ENCODE measurements at regions of chr22 and their contacts with region 1.

Region 1: DNA sequence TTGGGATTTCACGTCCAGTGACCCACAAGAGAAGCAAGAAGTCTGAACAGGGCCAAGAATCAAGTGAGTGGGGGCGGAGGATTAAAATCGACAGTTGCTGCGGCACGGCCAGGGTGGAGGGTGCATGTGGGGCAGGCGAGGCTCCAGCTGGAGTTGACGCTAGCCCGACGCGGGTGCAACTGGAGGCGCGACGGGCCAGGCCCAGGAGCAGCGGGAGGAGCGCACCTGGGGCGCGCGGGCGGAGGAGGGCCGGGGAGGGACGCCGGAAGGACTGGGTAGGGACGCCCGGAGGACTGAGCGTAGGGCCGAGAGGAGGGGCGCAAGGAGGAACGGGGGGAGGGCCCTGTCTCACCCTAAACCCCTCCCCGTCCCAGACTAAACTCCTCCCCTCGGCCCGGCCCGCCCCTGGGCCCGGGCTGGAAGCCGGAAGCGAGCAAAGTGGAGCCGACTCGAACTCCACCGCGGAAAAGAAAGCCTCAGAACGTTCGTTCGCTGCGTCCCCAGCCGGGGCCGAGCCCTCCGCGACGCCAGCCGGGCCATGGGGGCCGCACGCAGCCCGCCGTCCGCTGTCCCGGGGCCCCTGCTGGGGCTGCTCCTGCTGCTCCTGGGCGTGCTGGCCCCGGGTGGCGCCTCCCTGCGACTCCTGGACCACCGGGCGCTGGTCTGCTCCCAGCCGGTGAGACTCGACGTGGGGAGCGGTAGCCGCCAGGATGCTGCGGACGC is at the start of gene IL17RA:
- DNase-seq: peak; percentile 90 to 95 (median 91)
- H3K4me3 ChIP-seq: peak within 1 kb of the TSS; percentile 59 to 97 (median 78)
- H3K27ac ChIP-seq: peak within 1 kb of the TSS; percentile 61 to 97 (median 84)
- H3K4me1 ChIP-seq: peaks cover 6 to 14% of the 10 kb centered on the region in 2 donors
- H3K27me3 ChIP-seq: no peaks in the 10 kb centered on the region
- CTCF ChIP-seq: no peak
- POLR2A ChIP-seq: peak; percentile 29 to 72
- total RNA-seq, gene IL17RA: 2.2 to 31.8 (median 24.7) TPM

Region 2: GRCh38 chr22:17158568-17159503 is 74.1 kb after region 1 on chr22 and contains the start of gene HDHD5:
- intact Hi-C with region 1: loop called in 1 of 2 experiments (anchors 10 kb)
- DNase-seq: peak; percentile 87 to 94 (median 92)
- H3K4me3 ChIP-seq: peak within 1 kb of the TSS; percentile 28 to 79 (median 61)
- H3K27ac ChIP-seq: peak within 1 kb of the TSS; percentile 81 to 96 (median 91)
- H3K4me1 ChIP-seq: peaks cover 13 to 31% of the 10 kb centered on the region in 2 donors
- H3K27me3 ChIP-seq: no peaks in the 10 kb centered on the region
- CTCF ChIP-seq: no peak
- POLR2A ChIP-seq: peak; percentile 41 to 72
- total RNA-seq, gene HDHD5: 36.6 to 60.8 (median 46.5) TPM

Region 3: GRCh38 chr22:17171313-17172171 is 86.8 kb after region 1 on chr22:
- intact Hi-C with region 1: loop called in 1 of 2 experiments (anchors 5 kb)
- DNase-seq: peak; percentile 90 to 94 (median 92)
- H3K4me3 ChIP-seq: peak overlapping the region in 3 of 4 donors; percentile 60 to 64 (median 64)
- H3K27ac ChIP-seq: peak overlapping the region; percentile 77 to 98 (median 96)
- H3K4me1 ChIP-seq: peaks cover 7 to 15% of the 10 kb centered on the region in 2 donors
- H3K27me3 ChIP-seq: no peaks in the 10 kb centered on the region
- CTCF ChIP-seq: peak; percentile 75 to 95 (median 88)
- POLR2A ChIP-seq: peak; percentile 68 to 80

Region 4: GRCh38 chr22:17199003-17199731 is 114.5 kb after region 1 on chr22:
- intact Hi-C with region 1: no loop called
- DNase-seq: peak in 5 of 7 donors; percentile 16 to 64 (median 22)
- H3K4me3 ChIP-seq: peak overlapping the region in 1 of 4 donors; percentile 41
- H3K27ac ChIP-seq: peak overlapping the region in 2 of 5 donors; percentile 45 to 73
- H3K4me1 ChIP-seq: no peaks in the 10 kb centered on the region
- H3K27me3 ChIP-seq: no peaks in the 10 kb centered on the region
- CTCF ChIP-seq: no peak
- POLR2A ChIP-seq: no peak

Region 5: GRCh38 chr22:17492247-17492646 is 407.5 kb after region 1 on chr22:
- intact Hi-C with region 1: loop called in 1 of 2 experiments (anchors 10 kb)
- DNase-seq: peak in 1 of 7 donors; percentile 27
- H3K4me3 ChIP-seq: no peak overlapping the region
- H3K27ac ChIP-seq: no peak overlapping the region
- H3K4me1 ChIP-seq: no peaks in the 10 kb centered on the region
- H3K27me3 ChIP-seq: no peaks in the 10 kb centered on the region
- CTCF ChIP-seq: no peak
- POLR2A ChIP-seq: no peak